ENCODE measurements at regions of chr12 and their contacts with region 1.

Region 1: GRCh38 chr12:32755654-32756475 is at the start of gene YARS2:
- DNase-seq: peak; percentile 93
- H3K4me3 ChIP-seq: peak within 1 kb of the TSS; percentile 68 to 82 (median 76)
- H3K27ac ChIP-seq: peak within 1 kb of the TSS; percentile 96
- H3K4me1 ChIP-seq: peaks cover 23% of the 10 kb centered on the region
- H3K27me3 ChIP-seq: no peaks in the 10 kb centered on the region
- CTCF ChIP-seq: peak; percentile 71 to 81
- total RNA-seq, gene YARS2: 31.5 to 37.5 TPM

Region 2: DNA sequence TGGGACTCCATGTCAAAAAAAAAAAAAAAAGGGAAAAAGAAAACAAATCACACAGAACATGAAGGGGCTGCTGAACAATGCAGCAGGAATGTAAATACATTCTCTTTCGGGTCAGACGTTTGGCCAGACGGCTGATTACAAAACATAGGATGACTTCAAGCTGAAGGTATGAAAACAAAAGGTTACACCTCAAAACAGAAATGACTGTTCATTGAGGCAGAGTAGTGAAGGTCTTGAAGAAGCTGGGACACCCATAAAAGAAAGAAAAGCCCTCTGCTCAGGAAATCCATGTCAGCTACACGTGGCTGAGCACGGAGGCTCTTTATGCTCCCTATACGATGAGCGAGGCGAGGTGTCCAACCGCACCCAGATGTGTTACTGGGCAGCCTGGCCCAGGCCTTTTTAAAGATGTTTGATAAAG is 318.8 kb before region 1 on chr12:
- CTCF ChIA-PET with region 1: no interaction called
- dilution Hi-C with region 1: no loop called
- in situ Hi-C with region 1: no loop called
- intact Hi-C with region 1: loop called (anchors 1 kb)
- DNase-seq: peak; percentile 90
- H3K4me3 ChIP-seq: no peak overlapping the region
- H3K27ac ChIP-seq: peak overlapping the region; percentile 87
- H3K4me1 ChIP-seq: peaks cover 54% of the 10 kb centered on the region
- H3K27me3 ChIP-seq: no peaks in the 10 kb centered on the region
- CTCF ChIP-seq: no peak

Region 3: DNA sequence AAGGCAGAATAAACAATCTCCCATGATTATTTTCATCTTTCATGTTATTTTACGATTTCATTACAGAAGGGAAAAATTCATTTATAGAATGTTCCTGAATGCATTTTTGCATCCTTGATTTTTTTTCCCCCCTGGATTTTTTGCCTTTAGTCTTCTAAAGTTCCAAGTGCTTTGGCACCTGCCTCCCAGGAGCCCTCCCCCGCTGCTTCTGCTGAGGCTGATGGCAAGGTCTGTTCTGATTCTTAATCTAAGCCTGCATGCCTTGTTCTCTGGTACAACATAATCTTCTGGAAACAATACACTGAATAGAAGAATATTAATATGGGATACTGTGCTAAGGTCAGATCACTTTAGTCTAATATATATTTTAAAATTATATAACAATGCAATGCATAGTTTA is 18.1 kb before region 1 on chr12:
- CTCF ChIA-PET with region 1: interaction called, 10 read pairs
- dilution Hi-C with region 1: no loop called
- in situ Hi-C with region 1: no loop called
- intact Hi-C with region 1: no loop called
- DNase-seq: no peak
- H3K4me3 ChIP-seq: no peak overlapping the region
- H3K27ac ChIP-seq: no peak overlapping the region
- H3K4me1 ChIP-seq: no peaks in the 10 kb centered on the region
- H3K27me3 ChIP-seq: no peaks in the 10 kb centered on the region
- CTCF ChIP-seq: no peak

Region 4: GRCh38 chr12:32918890-32919801 is 163.3 kb after region 1 on chr12:
- CTCF ChIA-PET with region 1: interaction called, 3 read pairs
- dilution Hi-C with region 1: no loop called
- in situ Hi-C with region 1: loop called in 1 of 2 experiments (anchors 10 kb)
- intact Hi-C with region 1: loop called (anchors 1 kb)
- DNase-seq: peak; percentile 90
- H3K4me3 ChIP-seq: no peak overlapping the region
- H3K27ac ChIP-seq: peak overlapping the region; percentile 96
- H3K4me1 ChIP-seq: peaks cover 47% of the 10 kb centered on the region
- H3K27me3 ChIP-seq: no peaks in the 10 kb centered on the region
- CTCF ChIP-seq: peak; percentile 55 to 60

Region 5: GRCh38 chr12:33587870-33588712 is 832.2 kb after region 1 on chr12:
- CTCF ChIA-PET with region 1: no interaction called
- dilution Hi-C with region 1: no loop called
- in situ Hi-C with region 1: loop called (anchors 25 kb)
- intact Hi-C with region 1: no loop called
- DNase-seq: peak; percentile 93
- H3K4me3 ChIP-seq: no peak overlapping the region
- H3K27ac ChIP-seq: peak overlapping the region; percentile 78
- H3K4me1 ChIP-seq: peaks cover 26% of the 10 kb centered on the region
- H3K27me3 ChIP-seq: no peaks in the 10 kb centered on the region
- CTCF ChIP-seq: no peak

Region 6: DNA sequence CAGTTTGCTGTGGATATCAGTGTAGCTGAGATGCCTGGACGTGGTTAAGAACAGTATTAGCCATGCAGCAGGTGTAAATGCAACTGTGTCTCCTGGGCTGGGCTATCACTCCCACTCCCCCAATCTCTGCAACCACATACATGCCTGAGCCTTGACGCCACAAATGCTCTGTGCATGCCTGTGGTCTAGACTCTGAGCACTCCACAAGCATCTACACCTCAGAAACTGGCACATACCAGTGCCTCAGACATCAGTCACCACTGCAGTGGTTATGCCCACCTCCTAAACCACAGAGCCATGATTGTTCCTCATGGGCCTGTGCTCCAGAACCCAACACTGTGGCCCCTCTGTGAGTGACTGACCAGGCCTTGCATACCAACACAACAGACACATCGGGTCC is 1039.7 kb after region 1 on chr12:
- CTCF ChIA-PET with region 1: no interaction called
- dilution Hi-C with region 1: no loop called
- in situ Hi-C with region 1: loop called in 1 of 2 experiments (anchors 25 kb)
- intact Hi-C with region 1: no loop called
- DNase-seq: peak; percentile 98
- H3K4me3 ChIP-seq: no peak overlapping the region
- H3K27ac ChIP-seq: peak overlapping the region; percentile 59
- H3K4me1 ChIP-seq: peaks cover 20% of the 10 kb centered on the region
- H3K27me3 ChIP-seq: no peaks in the 10 kb centered on the region
- CTCF ChIP-seq: no peak